ENCODE measurements at regions of chr19 and their contacts with region 1.

Region 1: GRCh38 chr19:19663256-19664038 is at the start of gene ATP13A1:
- DNase-seq: peak; percentile 89 to 99 (median 94)
- ATAC-seq: peak; percentile 63
- H3K4me3 ChIP-seq: peak within 1 kb of the TSS; percentile 67 to 93
- H3K4me3 Mint-ChIP-seq: peak within 1 kb of the TSS; percentile 90
- H3K27ac ChIP-seq: peak within 1 kb of the TSS; percentile 88 to 97
- H3K27ac Mint-ChIP-seq: peak within 1 kb of the TSS; percentile 99
- H3K4me1 ChIP-seq: peaks cover 36% of the 10 kb centered on the region
- H3K4me1 Mint-ChIP-seq: peaks cover 43% of the 10 kb centered on the region
- H3K27me3 ChIP-seq: no peaks in the 10 kb centered on the region
- H3K27me3 Mint-ChIP-seq: no peaks in the 10 kb centered on the region
- CTCF ChIP-seq: peak; percentile 34
- total RNA-seq, gene ATP13A1: 79.4 to 87.9 TPM

Region 2: DNA sequence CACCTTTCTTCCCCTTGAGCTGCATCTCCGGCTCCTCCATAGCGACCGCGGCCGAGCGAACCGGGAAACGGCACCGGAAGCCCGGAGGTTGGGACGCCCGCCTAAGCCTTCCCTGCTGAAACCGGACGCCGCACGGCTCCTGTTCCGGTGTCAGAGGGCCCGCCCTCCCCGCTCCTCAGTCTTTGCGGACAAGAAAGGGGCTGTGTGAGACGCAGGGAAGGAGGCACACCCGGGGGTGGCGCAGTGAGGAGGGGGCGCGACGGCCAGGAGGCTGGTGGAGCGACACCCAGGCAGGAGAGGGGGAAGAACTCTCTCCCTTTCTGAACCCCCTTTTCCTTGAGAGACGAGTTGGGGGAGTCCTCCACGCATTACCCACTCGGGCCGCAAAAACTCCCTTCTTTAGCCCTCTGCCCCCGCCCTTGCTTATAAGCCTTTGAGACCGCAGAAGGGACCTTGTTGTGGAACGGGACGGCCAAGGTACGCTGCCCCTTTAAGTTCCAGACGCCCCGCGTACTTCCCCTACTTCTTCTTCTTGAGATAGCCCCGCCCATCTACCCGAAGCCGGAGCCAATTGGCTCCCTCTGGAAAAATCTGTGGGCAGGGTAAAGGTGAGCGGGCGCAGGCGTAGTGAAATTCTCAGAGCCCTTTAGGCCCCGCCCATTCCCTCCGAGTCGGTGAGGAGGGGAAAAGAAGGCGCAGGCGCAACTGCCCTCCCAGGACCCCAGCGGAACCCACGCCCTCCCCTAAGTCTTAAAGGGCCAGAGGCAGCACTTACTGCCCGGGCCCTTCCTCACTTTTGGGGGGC is 471.2 kb before region 1 on chr19 and contains the starts of genes BORCS8 and RFXANK:
- CTCF ChIA-PET with region 1: no interaction called
- POLR2A ChIA-PET with region 1: no interaction called
- intact Hi-C with region 1: loop called (anchors 2 kb)
- DNase-seq: peak; percentile 97 to 100 (median 98)
- ATAC-seq: peak; percentile 91
- H3K4me3 ChIP-seq: peak within 1 kb of the TSS; percentile 100
- H3K4me3 Mint-ChIP-seq: peak within 1 kb of the TSS; percentile 96
- H3K27ac ChIP-seq: peak within 1 kb of the TSS; percentile 98 to 100
- H3K27ac Mint-ChIP-seq: peak within 1 kb of the TSS; percentile 98
- H3K4me1 ChIP-seq: peaks cover 36% of the 10 kb centered on the region
- H3K4me1 Mint-ChIP-seq: peaks cover 52% of the 10 kb centered on the region
- H3K27me3 ChIP-seq: no peaks in the 10 kb centered on the region
- H3K27me3 Mint-ChIP-seq: no peaks in the 10 kb centered on the region
- CTCF ChIP-seq: no peak
- total RNA-seq, gene BORCS8: 6.6 to 13.6 TPM
- total RNA-seq, gene RFXANK: 33.4 to 38.8 TPM

Region 3: DNA sequence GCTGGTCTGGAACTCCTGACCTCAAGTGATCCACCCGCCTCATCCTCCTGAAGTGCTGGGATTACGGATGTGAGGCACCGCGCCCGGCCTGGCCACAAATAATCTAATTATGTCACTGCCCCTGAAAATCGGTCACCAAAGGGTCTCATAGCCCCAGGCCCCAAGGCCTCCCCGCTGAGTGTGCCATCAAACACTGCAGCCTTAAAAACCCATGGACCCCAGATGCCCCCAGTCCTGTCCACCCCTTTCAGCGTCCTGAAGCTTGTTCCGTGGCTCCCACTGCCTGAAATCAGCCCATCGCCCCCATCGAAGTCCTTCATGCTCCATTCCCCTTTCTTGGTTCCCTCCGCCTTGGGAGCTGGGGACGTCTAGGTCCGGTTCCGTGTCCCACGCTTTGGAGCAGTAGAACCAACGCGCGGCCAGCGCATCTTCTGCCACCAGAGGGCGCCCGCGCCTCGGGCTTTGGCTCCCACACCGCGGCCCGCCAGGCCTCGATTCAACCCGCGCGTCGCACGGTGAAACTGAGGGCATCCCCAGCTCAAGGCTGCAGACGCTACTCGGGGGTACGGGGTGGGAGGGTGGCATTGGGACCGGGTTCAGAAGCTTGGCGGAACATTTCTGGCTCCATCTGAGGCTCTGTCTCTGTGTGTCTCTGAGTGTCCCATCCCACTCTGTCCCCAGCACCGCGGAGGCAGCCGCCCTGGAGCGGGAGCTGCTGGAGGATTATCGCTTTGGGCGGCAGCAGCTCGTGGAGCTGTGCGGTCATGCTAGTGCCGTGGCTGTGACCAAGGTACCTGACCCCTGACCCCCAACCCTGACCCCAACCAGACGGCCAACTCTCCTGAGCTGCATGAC is 131.3 kb before region 1 on chr19:
- CTCF ChIA-PET with region 1: interaction called, 9 read pairs
- POLR2A ChIA-PET with region 1: interaction called, 7 read pairs
- intact Hi-C with region 1: loop called in 1 of 2 experiments (anchors 1 kb)
- DNase-seq: peak; percentile 70 to 95 (median 87)
- ATAC-seq: peak; percentile 83
- H3K4me3 ChIP-seq: no peak overlapping the region
- H3K4me3 Mint-ChIP-seq: no peak overlapping the region
- H3K27ac ChIP-seq: no peak overlapping the region
- H3K27ac Mint-ChIP-seq: no peak overlapping the region
- H3K4me1 ChIP-seq: peaks cover 9% of the 10 kb centered on the region
- H3K4me1 Mint-ChIP-seq: peaks cover 12% of the 10 kb centered on the region
- H3K27me3 ChIP-seq: no peaks in the 10 kb centered on the region
- H3K27me3 Mint-ChIP-seq: no peaks in the 10 kb centered on the region
- CTCF ChIP-seq: peak; percentile 96

Region 4: DNA sequence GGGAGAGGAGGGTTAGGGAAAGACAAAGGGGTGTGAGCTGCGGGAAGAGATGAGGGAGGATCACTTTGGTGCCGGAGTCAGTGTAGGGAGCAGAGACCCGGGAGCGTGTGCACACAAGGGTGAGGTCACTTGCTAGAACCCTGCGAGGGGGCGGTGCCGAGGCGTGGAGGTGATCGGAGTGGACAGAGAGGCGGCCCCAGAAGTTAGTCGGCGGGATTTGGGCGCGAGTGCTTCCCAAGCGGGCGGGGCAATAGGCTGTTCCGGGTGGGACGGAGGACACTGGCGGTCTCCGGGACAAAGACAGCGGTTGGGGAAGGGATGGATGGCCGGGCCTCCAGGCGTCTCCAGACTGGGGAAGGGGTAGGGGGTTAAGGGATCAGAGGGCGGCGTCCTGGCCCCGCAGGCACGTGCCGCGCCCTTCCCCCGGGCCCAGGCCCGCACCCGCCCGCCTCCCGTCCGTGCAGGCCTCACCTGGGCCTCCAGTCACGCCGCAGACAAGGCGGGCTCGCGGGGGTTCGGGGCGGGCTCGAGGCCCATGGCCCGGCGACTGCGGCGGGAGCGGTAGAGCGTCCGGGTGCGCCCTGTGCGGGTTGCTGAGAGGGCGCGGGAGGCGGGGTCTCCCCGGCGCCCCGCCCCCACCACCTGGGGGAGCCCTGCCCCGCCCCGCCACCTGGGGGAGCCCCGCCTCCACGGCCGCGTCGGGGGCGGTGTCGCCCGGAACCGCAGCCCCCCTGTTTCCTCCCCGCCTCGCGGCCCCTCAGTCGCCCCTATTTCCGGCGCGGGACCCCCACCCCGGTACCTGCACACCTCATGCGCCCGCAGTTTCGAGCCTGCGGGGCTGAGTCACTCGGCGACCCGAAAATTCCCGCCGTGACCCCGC is 35.6 kb before region 1 on chr19 and contains the start of gene LPAR2:
- CTCF ChIA-PET with region 1: no interaction called
- POLR2A ChIA-PET with region 1: interaction called, 7 read pairs
- intact Hi-C with region 1: loop called (anchors 1 kb)
- DNase-seq: peak; percentile 54 to 91 (median 85)
- ATAC-seq: peak; percentile 85
- H3K4me3 ChIP-seq: peak within 1 kb of the TSS; percentile 70 to 73
- H3K4me3 Mint-ChIP-seq: peak within 1 kb of the TSS; percentile 88
- H3K27ac ChIP-seq: peak within 1 kb of the TSS; percentile 64 to 71
- H3K27ac Mint-ChIP-seq: peak within 1 kb of the TSS; percentile 94
- H3K4me1 ChIP-seq: peaks cover 28% of the 10 kb centered on the region
- H3K4me1 Mint-ChIP-seq: peaks cover 30% of the 10 kb centered on the region
- H3K27me3 ChIP-seq: no peaks in the 10 kb centered on the region
- H3K27me3 Mint-ChIP-seq: no peaks in the 10 kb centered on the region
- CTCF ChIP-seq: no peak
- total RNA-seq, gene LPAR2: 63.8 to 67.4 TPM

Region 5: GRCh38 chr19:19686580-19686979 is 23.1 kb after region 1 on chr19:
- CTCF ChIA-PET with region 1: no interaction called
- POLR2A ChIA-PET with region 1: interaction called, 53 read pairs
- intact Hi-C with region 1: loop called in 1 of 2 experiments (anchors 2 kb)
- DNase-seq: no peak
- ATAC-seq: no peak
- H3K4me3 ChIP-seq: no peak overlapping the region
- H3K4me3 Mint-ChIP-seq: no peak overlapping the region
- H3K27ac ChIP-seq: no peak overlapping the region
- H3K27ac Mint-ChIP-seq: no peak overlapping the region
- H3K4me1 ChIP-seq: no peaks in the 10 kb centered on the region
- H3K4me1 Mint-ChIP-seq: peaks cover 3% of the 10 kb centered on the region
- H3K27me3 ChIP-seq: no peaks in the 10 kb centered on the region
- H3K27me3 Mint-ChIP-seq: no peaks in the 10 kb centered on the region
- CTCF ChIP-seq: no peak

Region 6: GRCh38 chr19:19821366-19821951 is 158.0 kb after region 1 on chr19 and contains the start of gene ZNF506:
- CTCF ChIA-PET with region 1: no interaction called
- POLR2A ChIA-PET with region 1: interaction called, 38 read pairs
- intact Hi-C with region 1: loop called (anchors 1 to 5 kb)
- DNase-seq: peak; percentile 95 to 99 (median 97)
- ATAC-seq: peak; percentile 82
- H3K4me3 ChIP-seq: peak within 1 kb of the TSS; percentile 91 to 97
- H3K4me3 Mint-ChIP-seq: peak within 1 kb of the TSS; percentile 100
- H3K27ac ChIP-seq: peak within 1 kb of the TSS; percentile 96 to 98
- H3K27ac Mint-ChIP-seq: peak within 1 kb of the TSS; percentile 100
- H3K4me1 ChIP-seq: peaks cover 33% of the 10 kb centered on the region
- H3K4me1 Mint-ChIP-seq: peaks cover 38% of the 10 kb centered on the region
- H3K27me3 ChIP-seq: no peaks in the 10 kb centered on the region
- H3K27me3 Mint-ChIP-seq: no peaks in the 10 kb centered on the region
- CTCF ChIP-seq: no peak
- total RNA-seq, gene ZNF506: 50.2 to 50.4 TPM

Region 7: DNA sequence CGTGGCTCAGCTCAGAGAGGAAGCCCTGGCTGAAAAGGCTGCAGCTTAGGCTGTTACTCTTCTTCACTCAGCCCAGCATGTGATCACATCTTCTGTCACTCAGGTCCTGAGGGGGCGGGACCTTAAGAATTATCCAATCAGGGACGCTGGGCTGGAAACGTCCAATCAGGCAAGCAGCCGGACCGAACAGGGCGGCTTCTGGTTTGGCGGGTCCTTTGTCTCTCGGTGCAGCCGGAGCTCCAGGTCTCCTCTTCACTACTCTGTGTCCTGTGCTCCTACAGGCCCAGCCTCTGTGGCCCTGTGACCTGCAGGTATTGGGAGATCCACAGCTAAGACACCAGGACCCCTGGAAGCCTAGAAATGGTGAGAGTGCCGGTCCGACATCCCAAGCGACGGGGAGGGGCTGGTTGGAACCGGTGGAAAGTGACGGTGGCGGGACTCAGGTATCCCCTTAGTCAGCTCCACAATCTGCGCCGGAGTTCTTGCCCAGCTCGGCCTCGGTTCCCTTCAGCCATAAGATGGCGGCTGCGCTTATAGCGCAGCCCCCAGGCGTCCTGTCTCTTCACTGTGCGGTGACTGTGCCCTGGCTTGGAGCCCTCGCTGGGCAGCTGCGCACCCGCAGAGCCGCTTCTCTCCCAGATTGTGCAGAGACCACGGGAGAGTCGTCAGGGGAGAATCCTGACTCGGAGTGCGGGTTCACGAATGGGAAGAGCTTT is 237.4 kb after region 1 on chr19 and contains the start of gene ZNF93:
- CTCF ChIA-PET with region 1: no interaction called
- POLR2A ChIA-PET with region 1: interaction called, 6 read pairs
- intact Hi-C with region 1: loop called in 1 of 2 experiments (anchors 1 kb)
- DNase-seq: peak; percentile 83 to 95 (median 91)
- ATAC-seq: peak; percentile 97
- H3K4me3 ChIP-seq: peak within 1 kb of the TSS; percentile 86 to 95
- H3K4me3 Mint-ChIP-seq: peak within 1 kb of the TSS; percentile 94
- H3K27ac ChIP-seq: peak within 1 kb of the TSS; percentile 46 to 75
- H3K27ac Mint-ChIP-seq: peak within 1 kb of the TSS; percentile 91
- H3K4me1 ChIP-seq: peaks cover 10% of the 10 kb centered on the region
- H3K4me1 Mint-ChIP-seq: peaks cover 38% of the 10 kb centered on the region
- H3K27me3 ChIP-seq: no peaks in the 10 kb centered on the region
- H3K27me3 Mint-ChIP-seq: no peaks in the 10 kb centered on the region
- CTCF ChIP-seq: no peak
- total RNA-seq, gene ZNF93: 5.9 to 6.8 TPM

Measured in CD8-positive, alpha-beta T cell (primary cell).